ENCODE measurements at regions of chr9 and their contacts with region 1.

Region 1: DNA sequence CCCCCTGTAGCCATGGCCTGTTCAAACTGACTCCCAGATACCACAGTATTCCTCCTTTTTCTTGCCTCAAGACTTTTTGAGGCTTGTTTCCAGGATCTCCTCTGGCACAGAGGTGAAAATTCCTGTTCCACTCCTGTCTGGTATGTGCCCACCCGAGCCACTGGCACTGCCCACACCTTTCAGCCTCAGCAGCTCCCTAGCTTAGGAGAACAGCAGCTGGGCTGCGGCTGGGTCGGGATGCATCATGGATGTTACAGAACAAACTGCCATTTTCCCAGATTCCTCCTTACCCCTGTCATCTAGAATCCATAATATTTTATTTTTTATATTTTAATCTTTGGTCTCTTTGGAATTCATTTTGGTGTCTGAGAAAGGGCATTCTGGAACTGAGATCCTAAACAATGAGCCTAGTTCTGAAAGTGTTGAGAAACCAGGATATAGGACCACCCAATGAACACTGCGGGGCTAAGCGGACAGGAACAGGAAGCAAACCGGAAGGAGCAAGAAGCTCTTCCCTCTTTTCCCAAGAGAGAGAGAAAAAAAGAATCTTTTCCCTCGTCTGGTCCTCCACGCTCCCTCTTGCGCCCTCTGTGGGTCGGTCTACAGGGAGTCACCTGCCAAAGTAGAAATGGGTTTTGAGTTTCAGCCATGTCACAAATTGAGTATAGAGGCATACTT is 12.5 kb downstream of the OR2S2 start:
- DNase-seq: peak; percentile 26 to 61 (median 35)
- H3K4me3 ChIP-seq: no peak overlapping the region
- H3K4me3 Mint-ChIP-seq: peak overlapping the region in 2 of 7 donors; percentile 13 to 32
- H3K27ac ChIP-seq: no peak overlapping the region
- H3K27ac Mint-ChIP-seq: no peak overlapping the region
- H3K4me1 ChIP-seq: peaks cover 62% of the 10 kb centered on the region
- H3K4me1 Mint-ChIP-seq: peaks cover 21 to 25% (median 24%) of the 10 kb centered on the region in 3 donors
- H3K27me3 ChIP-seq: no peaks in the 10 kb centered on the region
- H3K27me3 Mint-ChIP-seq: peaks cover 3 to 9% of the 10 kb centered on the region in 2 donors

Region 2: DNA sequence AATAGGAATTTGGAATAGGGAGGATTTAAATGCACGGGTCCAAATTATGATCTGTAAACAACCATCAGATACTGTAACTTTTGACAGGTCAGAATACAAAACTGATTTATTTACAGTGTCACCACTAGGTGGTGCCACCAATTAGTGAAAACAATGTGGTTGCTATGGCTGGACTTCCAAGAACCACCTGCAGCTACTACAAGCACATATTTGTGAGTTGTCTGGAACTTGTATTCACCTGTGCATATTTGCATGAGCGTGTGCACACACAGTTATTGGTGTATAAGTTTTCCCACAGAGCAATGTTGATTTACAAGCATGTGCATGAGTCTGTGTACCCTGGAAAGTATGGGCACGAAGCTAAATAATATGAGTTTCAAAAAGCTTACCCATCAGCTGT is 42.4 kb before region 1 on chr9:
- CTCF ChIA-PET with region 1: interaction called, 27 read pairs
- POLR2A ChIA-PET with region 1: no interaction called
- DNase-seq: peak in 2 of 5 donors; percentile 37 to 54
- H3K4me3 ChIP-seq: no peak overlapping the region
- H3K4me3 Mint-ChIP-seq: no peak overlapping the region
- H3K27ac ChIP-seq: no peak overlapping the region
- H3K27ac Mint-ChIP-seq: no peak overlapping the region
- H3K4me1 ChIP-seq: peaks cover 24% of the 10 kb centered on the region
- H3K4me1 Mint-ChIP-seq: peaks cover under 1 to 17% (median 7%) of the 10 kb centered on the region in 3 donors
- H3K27me3 ChIP-seq: no peaks in the 10 kb centered on the region
- H3K27me3 Mint-ChIP-seq: peaks cover 5 to 27% of the 10 kb centered on the region in 2 donors

Region 3: GRCh38 chr9:36177571-36177970 is 232.1 kb after region 1 on chr9:
- CTCF ChIA-PET with region 1: no interaction called
- POLR2A ChIA-PET with region 1: no interaction called
- DNase-seq: no peak
- H3K4me3 ChIP-seq: no peak overlapping the region
- H3K4me3 Mint-ChIP-seq: no peak overlapping the region
- H3K27ac ChIP-seq: no peak overlapping the region
- H3K27ac Mint-ChIP-seq: no peak overlapping the region
- H3K4me1 ChIP-seq: no peaks in the 10 kb centered on the region
- H3K4me1 Mint-ChIP-seq: peaks cover 0 to 3% (median 0%) of the 10 kb centered on the region in 3 donors
- H3K27me3 ChIP-seq: no peaks in the 10 kb centered on the region
- H3K27me3 Mint-ChIP-seq: peaks cover 6 to 8% of the 10 kb centered on the region in 2 donors